Activated CD8-positive, alpha-beta T cell treated with anti-CD3 and anti-CD28 coated beads for 36 hours (primary cell): ENCODE measurements at regions of chrX and their contacts with region 1.

Region 1: GRCh38 chrX:39261446-39262147 is 460.3 kb downstream of the MID1IP1 start:
- DNase-seq: peak; percentile 20
- ATAC-seq: peak; percentile 74
- H3K4me3 Mint-ChIP-seq: no peak overlapping the region
- H3K27ac Mint-ChIP-seq: peak overlapping the region; percentile 66
- H3K4me1 Mint-ChIP-seq: peaks cover 50% of the 10 kb centered on the region
- H3K27me3 Mint-ChIP-seq: no peaks in the 10 kb centered on the region
- CTCF ChIP-seq: peak; percentile 66

Region 2: DNA sequence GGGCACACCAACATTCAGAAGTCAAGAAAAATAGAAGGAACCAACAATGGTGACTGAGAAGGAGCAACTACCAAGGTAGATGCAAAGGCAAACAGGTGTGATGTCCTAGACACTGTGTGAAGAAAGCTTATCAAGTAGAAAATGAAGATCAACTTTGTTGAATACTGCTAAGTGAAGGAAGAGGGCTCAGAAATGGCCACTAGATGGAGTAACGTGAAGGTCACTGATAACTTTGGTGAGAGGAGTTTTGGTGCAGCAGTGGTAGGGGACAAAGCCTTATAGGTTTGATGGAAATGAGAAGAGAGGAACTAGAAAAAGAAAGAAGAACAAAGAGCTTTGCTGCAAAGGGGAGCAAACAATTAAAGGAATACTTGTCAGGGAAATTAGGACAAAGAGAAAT is 885.7 kb before region 1 on chrX:
- CTCF ChIA-PET with region 1: no interaction called
- POLR2A ChIA-PET with region 1: no interaction called
- intact Hi-C with region 1: no loop called
- DNase-seq: peak; percentile 1
- ATAC-seq: no peak
- H3K4me3 Mint-ChIP-seq: no peak overlapping the region
- H3K27ac Mint-ChIP-seq: no peak overlapping the region
- H3K4me1 Mint-ChIP-seq: no peaks in the 10 kb centered on the region
- H3K27me3 Mint-ChIP-seq: peaks cover 2% of the 10 kb centered on the region
- CTCF ChIP-seq: no peak

Region 3: DNA sequence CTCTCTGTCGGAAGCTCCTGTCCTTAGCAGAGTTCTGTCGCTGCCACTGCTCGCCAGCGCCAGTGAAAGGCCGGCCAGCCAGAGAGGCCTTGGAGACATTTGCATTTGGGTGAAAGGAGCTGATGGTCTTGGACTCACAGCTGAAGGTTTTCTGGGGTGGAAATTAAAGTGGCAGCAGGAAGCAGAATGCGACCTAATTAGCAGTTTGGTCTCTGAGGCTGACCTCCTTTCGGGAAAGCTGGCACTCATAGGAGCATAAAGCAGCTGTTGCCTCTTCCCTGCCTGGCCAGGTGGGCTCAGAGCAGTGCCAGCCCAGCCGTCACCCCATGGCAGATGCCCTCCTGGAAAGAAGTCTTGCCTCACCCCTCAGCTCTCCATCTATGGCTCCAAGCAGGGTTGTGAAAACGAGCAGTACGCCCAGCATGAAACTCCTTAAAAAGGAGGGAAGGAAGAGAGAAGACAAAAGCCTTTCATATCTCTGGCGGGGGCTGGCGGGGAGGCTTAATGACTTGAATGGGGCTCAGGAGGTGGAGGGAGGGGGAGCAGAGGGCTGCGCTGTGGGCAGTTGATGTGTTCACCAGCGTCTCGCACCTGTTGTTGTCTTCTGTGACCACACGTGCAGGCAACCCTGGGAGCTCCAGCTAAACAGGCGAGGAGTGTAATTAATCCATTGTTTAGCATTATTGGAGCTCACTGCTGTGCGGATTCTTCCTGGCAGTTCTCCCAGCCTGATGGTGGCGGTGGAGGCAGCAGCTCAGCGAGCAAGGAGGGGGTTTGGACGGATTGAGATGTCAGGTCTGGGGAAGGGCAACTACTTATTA is 196.3 kb before region 1 on chrX:
- CTCF ChIA-PET with region 1: no interaction called
- POLR2A ChIA-PET with region 1: no interaction called
- intact Hi-C with region 1: no loop called
- DNase-seq: no peak
- ATAC-seq: no peak
- H3K4me3 Mint-ChIP-seq: no peak overlapping the region
- H3K27ac Mint-ChIP-seq: no peak overlapping the region
- H3K4me1 Mint-ChIP-seq: no peaks in the 10 kb centered on the region
- H3K27me3 Mint-ChIP-seq: no peaks in the 10 kb centered on the region
- CTCF ChIP-seq: no peak

Region 4: DNA sequence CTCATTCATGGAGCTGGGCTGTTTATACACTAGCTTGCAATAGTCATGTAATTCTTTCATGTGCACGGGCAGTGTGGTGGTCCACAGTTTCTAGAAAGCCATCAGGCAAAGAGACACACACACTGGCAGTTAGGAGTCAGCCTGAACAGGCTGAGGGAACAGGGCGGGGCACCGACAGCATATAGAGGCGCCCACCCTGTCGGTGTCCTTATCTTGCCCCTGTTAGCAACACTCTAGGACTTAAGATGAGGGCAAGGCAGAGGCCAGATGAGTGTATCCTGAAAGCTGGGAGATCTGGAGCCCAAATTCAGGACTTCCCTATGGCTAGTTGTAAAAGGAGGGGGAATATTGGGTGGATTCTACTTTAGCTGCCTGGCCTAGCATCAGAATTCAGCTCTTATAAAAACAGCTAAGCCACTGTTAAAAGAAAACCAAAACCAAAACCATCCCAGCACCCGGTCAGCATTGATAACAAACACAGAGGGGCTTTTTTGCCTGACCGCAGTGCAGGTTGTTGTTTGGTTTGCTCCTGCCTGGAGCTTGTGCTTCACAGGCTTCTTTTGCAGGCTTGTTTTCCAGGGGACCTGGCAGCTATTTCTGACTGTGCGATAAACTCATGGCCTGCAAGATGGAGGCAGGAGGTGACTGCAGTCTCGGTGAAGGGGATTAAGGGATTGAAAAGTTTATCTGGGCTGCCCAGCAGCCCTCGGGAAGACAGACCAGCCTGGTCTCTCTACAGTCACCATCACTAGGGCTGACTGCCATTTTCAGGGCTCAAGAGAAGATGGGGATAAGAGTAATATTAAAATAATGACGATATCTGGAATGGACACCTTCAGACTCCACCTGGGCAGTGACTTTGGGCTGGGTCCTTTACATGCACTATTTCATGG is 178.6 kb after region 1 on chrX:
- CTCF ChIA-PET with region 1: no interaction called
- POLR2A ChIA-PET with region 1: no interaction called
- intact Hi-C with region 1: loop called (anchors 5 kb)
- DNase-seq: peak; percentile 60
- ATAC-seq: peak; percentile 37
- H3K4me3 Mint-ChIP-seq: peak overlapping the region; percentile 33
- H3K27ac Mint-ChIP-seq: peak overlapping the region; percentile 93
- H3K4me1 Mint-ChIP-seq: peaks cover 37% of the 10 kb centered on the region
- H3K27me3 Mint-ChIP-seq: no peaks in the 10 kb centered on the region
- CTCF ChIP-seq: no peak